ENCODE measurements at regions of chr20 and their contacts with region 1.

Region 1: GRCh38 chr20:13336308-13337089 is 115.4 kb downstream of the ISM1 start:
- DNase-seq: peak; percentile 68 to 83
- H3K4me3 ChIP-seq: no peak overlapping the region
- H3K4me3 Mint-ChIP-seq: peak overlapping the region; percentile 64
- H3K27ac Mint-ChIP-seq: peak overlapping the region; percentile 98
- H3K4me1 ChIP-seq: peaks cover 99% of the 10 kb centered on the region
- H3K4me1 Mint-ChIP-seq: peaks cover 72% of the 10 kb centered on the region
- H3K27me3 ChIP-seq: no peaks in the 10 kb centered on the region
- H3K27me3 Mint-ChIP-seq: no peaks in the 10 kb centered on the region
- CTCF ChIP-seq: no peak

Region 2: DNA sequence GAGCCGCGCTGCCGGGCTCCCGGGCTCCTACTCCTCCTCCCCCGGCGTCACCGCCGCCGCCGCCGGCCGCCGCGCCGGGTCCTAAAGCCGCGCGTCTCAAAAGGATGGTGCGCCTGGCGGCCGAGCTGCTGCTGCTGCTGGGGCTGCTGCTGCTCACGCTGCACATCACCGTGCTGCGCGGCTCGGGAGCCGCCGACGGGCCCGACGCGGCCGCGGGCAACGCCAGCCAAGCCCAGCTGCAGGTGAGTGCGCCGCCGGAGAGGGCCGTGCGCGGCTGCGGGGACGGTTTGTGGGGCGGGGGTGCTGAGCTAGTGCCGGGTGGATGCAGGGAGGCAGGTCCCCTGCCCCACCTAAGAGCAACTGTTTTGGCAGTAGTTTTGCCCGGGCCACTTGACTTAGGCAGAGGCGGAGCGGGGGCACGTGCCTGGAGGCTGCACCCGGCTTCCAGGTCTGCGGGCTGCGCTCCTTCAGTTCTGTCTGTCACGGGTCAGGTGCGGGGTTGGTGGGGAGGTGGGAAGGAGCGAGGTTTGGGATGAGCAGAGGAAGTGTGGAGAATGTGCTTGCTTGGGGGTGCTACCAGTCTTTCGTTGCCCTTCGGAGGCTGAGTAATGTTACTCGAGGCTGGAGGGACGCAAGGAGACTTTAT is 114.7 kb before region 1 on chr20:
- CTCF ChIA-PET with region 1: no interaction called
- POLR2A ChIA-PET with region 1: no interaction called
- intact Hi-C with region 1: loop called (anchors 5 kb)
- DNase-seq: peak; percentile 65 to 77
- H3K4me3 ChIP-seq: peak overlapping the region; percentile 54
- H3K4me3 Mint-ChIP-seq: peak overlapping the region; percentile 69
- H3K27ac Mint-ChIP-seq: no peak overlapping the region
- H3K4me1 ChIP-seq: peaks cover 10% of the 10 kb centered on the region
- H3K4me1 Mint-ChIP-seq: no peaks in the 10 kb centered on the region
- H3K27me3 ChIP-seq: no peaks in the 10 kb centered on the region; the same call in 1 of the 2 replicates
- H3K27me3 Mint-ChIP-seq: peaks cover 10% of the 10 kb centered on the region
- CTCF ChIP-seq: no peak

Region 3: DNA sequence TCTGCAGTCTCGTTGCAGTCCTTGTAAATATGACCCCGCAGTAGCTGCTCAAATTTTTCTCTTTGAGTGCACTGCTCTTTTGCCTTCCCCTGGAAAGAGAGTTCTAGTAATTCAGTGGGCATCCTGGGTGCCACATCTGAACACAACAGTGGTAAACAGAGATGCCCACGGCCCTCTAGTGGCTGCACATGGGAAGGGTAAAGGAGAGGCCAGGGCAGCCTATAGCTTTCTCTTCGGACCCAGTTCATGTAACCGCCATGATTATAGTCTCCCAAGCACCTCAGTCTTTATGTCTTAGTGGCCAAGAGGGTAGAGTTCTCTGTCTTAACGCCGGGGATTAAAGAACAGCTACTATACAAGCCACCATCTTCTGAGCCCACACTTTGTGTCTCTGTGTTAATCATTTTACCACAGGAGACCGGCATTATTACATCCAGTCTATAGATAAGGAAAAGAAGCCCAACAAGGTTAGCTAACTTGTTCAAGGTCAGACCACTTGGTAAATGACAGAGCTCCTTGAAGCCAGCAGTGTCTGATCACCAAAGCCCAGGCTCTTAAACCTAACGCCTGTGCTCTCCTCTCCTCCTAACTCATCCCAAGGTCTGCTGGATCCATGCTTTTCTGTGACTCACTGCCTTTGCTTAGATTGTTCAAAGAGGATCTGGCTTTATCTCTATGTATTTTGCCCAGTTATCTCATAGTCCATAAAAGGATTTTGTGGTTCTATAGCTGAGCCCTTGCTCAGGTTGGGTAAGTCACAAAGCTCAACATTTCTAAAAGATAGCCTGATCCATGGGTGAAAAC is 33.6 kb before region 1 on chr20:
- CTCF ChIA-PET with region 1: interaction called, 3 read pairs
- POLR2A ChIA-PET with region 1: no interaction called
- intact Hi-C with region 1: loop called (anchors 2 kb)
- DNase-seq: peak; percentile 62 to 71
- H3K4me3 ChIP-seq: no peak overlapping the region
- H3K4me3 Mint-ChIP-seq: peak overlapping the region; percentile 42
- H3K27ac Mint-ChIP-seq: peak overlapping the region; percentile 89
- H3K4me1 ChIP-seq: peaks cover 32% of the 10 kb centered on the region
- H3K4me1 Mint-ChIP-seq: peaks cover 18% of the 10 kb centered on the region
- H3K27me3 ChIP-seq: no peaks in the 10 kb centered on the region
- H3K27me3 Mint-ChIP-seq: no peaks in the 10 kb centered on the region
- CTCF ChIP-seq: peak; percentile 56 to 66

Region 4: DNA sequence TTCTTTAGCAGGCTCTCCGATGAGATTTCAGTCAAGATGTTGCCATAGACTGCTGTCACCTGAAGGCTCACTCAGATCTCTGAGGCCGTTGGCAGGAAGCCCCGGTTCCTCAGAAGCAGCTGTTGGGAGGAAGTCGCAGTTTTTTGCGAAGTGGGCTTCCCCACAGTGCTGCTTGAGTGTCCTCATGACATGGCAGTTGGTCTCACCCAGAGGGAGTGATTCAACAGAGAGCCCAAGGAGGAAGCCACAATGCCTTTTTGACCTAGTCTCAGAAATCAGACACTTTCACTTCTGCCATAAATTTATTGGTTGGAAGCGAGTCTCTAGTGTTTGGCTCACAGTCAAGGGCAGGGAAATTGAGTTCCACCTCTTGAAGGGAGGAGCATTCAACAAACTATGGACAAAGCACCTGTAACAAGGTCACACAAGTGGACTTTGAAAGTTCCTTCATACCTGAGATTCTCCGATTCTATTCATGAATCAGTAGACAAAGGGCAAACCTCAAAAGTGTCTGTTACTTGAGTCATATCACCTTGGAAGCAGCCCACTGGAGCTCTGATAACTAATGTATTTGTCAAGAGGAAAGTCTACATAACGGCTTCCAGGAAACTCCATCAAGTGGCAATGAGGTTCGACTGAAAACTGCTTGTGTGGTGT is 94.0 kb after region 1 on chr20:
- CTCF ChIA-PET with region 1: no interaction called
- POLR2A ChIA-PET with region 1: no interaction called
- intact Hi-C with region 1: loop called (anchors 5 kb)
- DNase-seq: peak; percentile 41 to 42
- H3K4me3 ChIP-seq: no peak overlapping the region
- H3K4me3 Mint-ChIP-seq: peak overlapping the region; percentile 18
- H3K27ac Mint-ChIP-seq: peak overlapping the region; percentile 64
- H3K4me1 ChIP-seq: peaks cover 17% of the 10 kb centered on the region
- H3K4me1 Mint-ChIP-seq: peaks cover 13% of the 10 kb centered on the region
- H3K27me3 ChIP-seq: no peaks in the 10 kb centered on the region
- H3K27me3 Mint-ChIP-seq: no peaks in the 10 kb centered on the region
- CTCF ChIP-seq: no peak

Region 5: DNA sequence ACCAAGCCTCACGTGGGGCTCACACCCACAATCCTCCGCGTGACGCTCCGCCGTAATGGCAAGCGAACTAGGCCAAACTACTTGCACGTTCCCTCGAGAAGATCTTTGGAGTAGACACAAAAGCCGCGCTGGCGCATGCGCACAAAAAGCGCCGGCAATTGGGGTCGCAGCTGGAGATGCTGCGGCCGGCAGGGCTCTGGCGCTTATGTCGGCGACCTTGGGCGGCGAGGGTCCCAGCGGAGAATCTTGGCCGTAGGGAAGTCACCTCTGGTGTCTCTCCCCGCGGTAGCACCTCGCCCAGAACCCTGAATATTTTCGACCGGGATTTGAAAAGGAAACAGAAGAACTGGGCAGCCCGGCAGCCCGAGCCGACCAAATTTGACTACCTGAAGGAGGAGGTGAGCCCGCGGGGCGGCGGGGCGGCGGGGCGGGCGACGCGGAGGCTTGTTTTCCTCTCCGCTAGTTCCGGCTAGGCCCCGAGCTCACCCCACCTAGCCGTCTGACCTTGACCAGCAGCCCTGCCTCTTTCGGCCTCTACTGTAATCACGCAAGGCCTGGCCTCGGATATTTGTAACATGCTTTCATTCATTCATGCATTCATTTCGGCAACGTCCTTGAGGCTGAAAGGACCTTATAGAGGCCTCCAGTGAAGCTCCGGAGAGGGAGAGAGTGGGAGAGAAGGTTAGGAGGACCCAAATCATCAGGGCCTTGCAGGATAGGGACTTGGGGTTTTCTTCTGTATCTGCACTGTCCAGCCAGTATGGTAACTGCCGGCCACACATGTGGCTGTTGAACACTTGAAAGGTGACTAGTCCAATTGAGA is 448.6 kb after region 1 on chr20 and contains the starts of genes ESF1 and NDUFAF5:
- CTCF ChIA-PET with region 1: no interaction called
- POLR2A ChIA-PET with region 1: no interaction called
- intact Hi-C with region 1: loop called (anchors 10 kb)
- DNase-seq: peak; percentile 95 to 98
- H3K4me3 ChIP-seq: peak within 1 kb of the TSS; percentile 83
- H3K4me3 Mint-ChIP-seq: peak within 1 kb of the TSS; percentile 93
- H3K27ac Mint-ChIP-seq: peak within 1 kb of the TSS; percentile 98
- H3K4me1 ChIP-seq: peaks cover 12% of the 10 kb centered on the region; the same call in 1 of the 2 replicates
- H3K4me1 Mint-ChIP-seq: peaks cover 14% of the 10 kb centered on the region
- H3K27me3 ChIP-seq: no peaks in the 10 kb centered on the region
- H3K27me3 Mint-ChIP-seq: no peaks in the 10 kb centered on the region
- CTCF ChIP-seq: no peak
- total RNA-seq, gene ESF1: 21.3 and 22.7 TPM in 2 replicates
- total RNA-seq, gene NDUFAF5: 34.9 and 38.3 TPM in 2 replicates

Measured in Caco-2 (cell line).